Testis (tissue), 5 donors: ENCODE measurements at regions of chr1 and their contacts with region 1.

Region 1: DNA sequence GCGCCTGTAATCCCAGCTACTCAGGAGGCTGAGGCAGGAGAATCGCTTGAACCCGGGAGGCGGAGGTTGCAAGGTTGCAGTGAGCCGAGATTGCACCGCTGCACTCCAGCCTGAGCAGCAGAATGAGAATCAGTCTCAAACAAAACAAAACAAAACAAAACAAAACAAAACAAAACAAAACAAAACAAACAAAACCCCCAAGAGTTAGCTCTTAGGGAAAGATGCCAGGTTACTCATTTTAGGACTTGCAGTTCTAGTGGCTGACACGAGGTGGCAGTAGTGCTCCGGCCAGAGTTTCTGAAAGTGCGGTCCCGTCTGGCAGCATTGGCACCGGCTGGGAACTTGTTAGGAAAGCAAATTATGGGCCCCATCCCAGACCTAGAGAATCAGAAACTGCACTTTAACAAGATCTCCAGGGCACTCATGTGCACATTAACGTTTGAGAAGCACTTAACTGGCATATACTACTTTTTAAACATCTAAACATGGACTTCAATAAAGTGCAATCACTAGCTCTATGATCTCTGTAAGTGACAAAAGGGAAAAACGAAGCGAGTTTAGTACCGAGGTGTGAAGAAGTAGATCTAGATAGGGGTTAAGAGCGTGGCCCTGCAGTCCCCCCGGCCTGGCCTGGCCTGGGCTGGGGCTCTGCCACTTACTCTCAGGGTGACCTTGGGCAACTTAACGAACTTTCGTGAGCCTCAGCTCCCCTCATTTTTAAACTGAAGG is 41.9 kb upstream of the TNFRSF1B start:
- DNase-seq: peak; percentile 87
- H3K4me3 ChIP-seq: no peak overlapping the region
- H3K27ac ChIP-seq: peak overlapping the region in 1 of 2 donors; percentile 30
- H3K4me1 ChIP-seq: peaks cover 9% of the 10 kb centered on the region
- H3K27me3 ChIP-seq: no peaks in the 10 kb centered on the region
- CTCF ChIP-seq: peak; percentile 93 to 98 (median 97)
- POLR2A ChIP-seq: no peak

Region 2: DNA sequence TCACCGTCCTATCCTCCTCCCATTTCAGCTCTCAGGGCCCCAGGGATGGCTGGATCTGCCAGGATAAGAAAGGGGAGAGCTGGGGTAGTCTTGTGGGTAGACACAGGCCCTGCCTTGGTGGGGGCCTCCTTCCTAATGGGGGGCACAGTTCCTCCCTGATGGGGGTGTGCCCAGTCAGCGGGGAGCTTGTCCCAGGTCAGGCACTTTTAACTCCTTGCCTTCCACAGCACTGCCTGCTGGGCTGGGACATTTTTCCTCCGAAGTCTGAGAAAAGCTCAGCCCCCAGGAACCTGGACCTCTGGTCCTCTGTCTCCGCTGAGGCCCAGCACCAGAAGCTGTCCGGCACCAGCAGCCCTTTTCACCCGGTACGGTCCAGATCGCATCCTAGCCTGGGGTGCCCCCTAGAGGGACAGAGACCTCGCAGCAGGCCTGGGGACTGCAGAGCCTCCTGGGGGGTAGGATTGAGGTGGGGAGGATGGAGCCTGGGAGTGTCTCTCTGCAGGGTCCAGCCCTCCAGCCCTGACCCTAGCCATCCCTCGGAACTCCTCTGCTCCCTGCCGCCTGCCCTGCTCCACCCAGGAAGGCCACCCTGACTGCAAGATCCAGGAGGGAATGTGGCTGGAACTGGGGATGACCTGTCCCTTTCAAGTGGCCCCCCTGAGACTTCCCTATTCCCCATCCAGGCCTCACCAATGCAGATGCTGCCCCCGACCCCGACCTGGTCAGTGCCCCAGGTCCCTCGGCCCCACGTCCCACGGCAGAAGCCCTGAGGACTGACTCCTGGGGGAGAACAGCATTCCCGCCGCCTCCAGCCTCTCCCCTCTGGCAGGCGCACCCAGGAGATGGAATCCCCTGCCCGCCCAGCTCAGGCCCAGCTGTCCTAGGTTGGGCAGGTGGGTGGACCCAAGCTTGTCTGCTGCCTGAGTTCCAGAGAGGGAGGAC is 93.5 kb before region 1 on chr1:
- intact Hi-C with region 1: no loop called
- DNase-seq: peak; percentile 74
- H3K4me3 ChIP-seq: no peak overlapping the region
- H3K27ac ChIP-seq: no peak overlapping the region
- H3K4me1 ChIP-seq: peaks cover 16% of the 10 kb centered on the region
- H3K27me3 ChIP-seq: no peaks in the 10 kb centered on the region
- CTCF ChIP-seq: peak; percentile 18 to 41 (median 30)
- POLR2A ChIP-seq: no peak

Region 3: GRCh38 chr1:12208764-12209494 is 84.1 kb after region 1 on chr1:
- intact Hi-C with region 1: loop called (anchors 5 kb)
- DNase-seq: peak; percentile 92
- H3K4me3 ChIP-seq: no peak overlapping the region
- H3K27ac ChIP-seq: no peak overlapping the region
- H3K4me1 ChIP-seq: no peaks in the 10 kb centered on the region
- H3K27me3 ChIP-seq: no peaks in the 10 kb centered on the region
- CTCF ChIP-seq: peak; percentile 90 to 97 (median 95)
- POLR2A ChIP-seq: no peak

Region 4: DNA sequence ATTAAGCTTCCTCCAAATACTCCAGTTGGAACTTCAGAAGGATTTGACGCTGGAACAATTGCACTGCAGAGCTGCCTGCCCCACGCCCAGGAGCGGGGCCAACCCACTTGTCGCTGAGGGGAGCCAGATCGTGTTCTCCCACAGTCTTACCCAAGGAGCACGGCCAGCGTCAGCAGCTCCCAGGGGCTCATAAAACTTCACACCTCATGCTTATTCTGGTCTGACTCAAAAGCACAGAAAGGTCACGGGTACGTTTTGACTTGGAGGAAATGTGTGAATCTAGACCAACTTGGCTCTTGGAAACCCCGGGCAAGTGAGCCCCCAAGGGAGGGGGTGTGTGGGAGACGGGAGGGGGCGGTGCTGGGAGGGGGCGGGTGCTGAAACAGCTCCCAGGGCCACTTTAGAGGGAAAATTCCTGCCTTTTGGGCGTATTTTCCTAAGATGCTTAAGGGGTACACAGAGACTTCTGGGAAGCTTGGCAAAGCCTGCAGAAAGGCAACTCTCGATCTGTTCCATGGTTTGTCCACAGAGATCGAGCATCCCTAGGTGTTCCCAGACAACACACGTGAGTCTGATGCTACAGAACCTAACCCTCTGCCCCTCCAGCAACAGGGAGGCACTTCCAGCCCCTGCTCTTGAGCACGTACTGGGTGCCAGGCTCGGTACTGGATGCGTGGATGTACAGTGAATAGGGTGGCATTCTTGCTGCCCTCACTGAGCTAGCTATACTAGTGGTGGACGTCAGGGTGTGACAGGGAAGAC is 394.3 kb after region 1 on chr1:
- intact Hi-C with region 1: no loop called
- DNase-seq: peak; percentile 47
- H3K4me3 ChIP-seq: no peak overlapping the region
- H3K27ac ChIP-seq: no peak overlapping the region
- H3K4me1 ChIP-seq: peaks cover 10% of the 10 kb centered on the region
- H3K27me3 ChIP-seq: no peaks in the 10 kb centered on the region
- CTCF ChIP-seq: no peak
- POLR2A ChIP-seq: no peak